CD8-positive, alpha-beta T cell (primary cell): ENCODE measurements at regions of chr22 and their contacts with region 1.

Region 1: GRCh38 chr22:36775964-36776669 is at the start of gene IFT27:
- DNase-seq: peak; percentile 89 to 100 (median 95)
- ATAC-seq: peak; percentile 84
- H3K4me3 ChIP-seq: peak within 1 kb of the TSS; percentile 72 to 73
- H3K4me3 Mint-ChIP-seq: peak within 1 kb of the TSS; percentile 93
- H3K27ac ChIP-seq: peak within 1 kb of the TSS; percentile 89 to 92
- H3K27ac Mint-ChIP-seq: peak within 1 kb of the TSS; percentile 94
- H3K4me1 ChIP-seq: peaks cover 14% of the 10 kb centered on the region
- H3K4me1 Mint-ChIP-seq: peaks cover 29% of the 10 kb centered on the region
- H3K27me3 ChIP-seq: no peaks in the 10 kb centered on the region
- H3K27me3 Mint-ChIP-seq: no peaks in the 10 kb centered on the region
- CTCF ChIP-seq: no peak
- total RNA-seq, gene IFT27: 9.2 to 9.9 TPM

Region 2: DNA sequence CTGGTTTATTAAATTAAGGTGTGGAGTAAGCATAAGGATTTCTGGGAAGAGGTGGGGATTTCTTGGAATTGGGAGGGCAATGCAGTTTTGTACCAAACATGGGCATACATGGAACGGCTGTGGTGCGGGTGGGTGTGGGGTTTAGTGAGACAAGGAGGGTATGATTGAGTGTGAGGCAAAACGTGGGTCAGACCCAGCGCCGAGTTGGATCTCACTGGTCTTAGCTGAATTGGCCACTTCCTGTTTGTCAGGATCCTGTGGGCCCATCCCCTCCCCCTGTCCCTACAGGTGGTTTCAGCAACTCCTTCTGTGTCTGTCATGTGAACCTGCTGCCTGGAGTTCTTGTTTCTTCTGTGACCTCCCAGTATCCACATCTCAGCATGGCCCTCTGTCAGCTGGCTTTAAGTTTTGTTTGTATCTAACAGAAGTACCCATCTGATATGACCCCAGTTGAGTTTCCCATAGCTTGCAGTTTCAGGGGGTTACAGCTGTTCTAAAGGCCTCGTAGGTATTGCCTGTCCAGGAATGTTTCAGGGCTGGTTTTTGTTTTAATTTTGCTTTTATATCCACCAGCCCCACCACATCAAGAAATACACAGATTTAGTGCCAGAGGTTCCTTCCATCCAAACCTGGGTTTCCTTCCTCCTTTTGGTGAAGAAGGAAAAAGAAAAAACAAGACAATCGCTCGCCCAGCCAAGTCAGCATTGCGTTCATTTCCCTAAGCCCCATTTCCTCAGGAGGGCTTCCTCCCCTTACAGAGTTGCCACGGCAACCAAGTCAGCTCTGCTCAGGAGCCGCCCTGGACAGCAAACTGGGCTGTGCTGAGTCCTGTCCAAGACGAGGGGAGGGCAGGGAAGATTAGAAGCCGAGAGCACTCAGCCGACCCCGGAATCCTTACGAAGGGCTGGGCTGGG is 517.2 kb before region 1 on chr22:
- CTCF ChIA-PET with region 1: no interaction called
- POLR2A ChIA-PET with region 1: no interaction called
- intact Hi-C with region 1: no loop called
- DNase-seq: peak in 2 of 9 experiments; percentile 26 to 38
- ATAC-seq: peak; percentile 26
- H3K4me3 ChIP-seq: no peak overlapping the region
- H3K4me3 Mint-ChIP-seq: peak overlapping the region; percentile 35
- H3K27ac ChIP-seq: peak overlapping the region in 1 of 2 experiments; percentile 26
- H3K27ac Mint-ChIP-seq: peak overlapping the region; percentile 80
- H3K4me1 ChIP-seq: peaks cover 28% of the 10 kb centered on the region
- H3K4me1 Mint-ChIP-seq: peaks cover 47% of the 10 kb centered on the region
- H3K27me3 ChIP-seq: no peaks in the 10 kb centered on the region
- H3K27me3 Mint-ChIP-seq: no peaks in the 10 kb centered on the region
- CTCF ChIP-seq: no peak

Region 3: GRCh38 chr22:36528795-36529751 is 247.0 kb before region 1 on chr22 and contains the start of gene EIF3D:
- CTCF ChIA-PET with region 1: no interaction called
- POLR2A ChIA-PET with region 1: no interaction called
- intact Hi-C with region 1: loop called in 1 of 2 experiments (anchors 1 kb)
- DNase-seq: peak; percentile 95 to 100 (median 98)
- ATAC-seq: peak; percentile 92
- H3K4me3 ChIP-seq: peak within 1 kb of the TSS; percentile 67 to 90
- H3K4me3 Mint-ChIP-seq: peak within 1 kb of the TSS; percentile 90
- H3K27ac ChIP-seq: peak within 1 kb of the TSS; percentile 91 to 93
- H3K27ac Mint-ChIP-seq: peak within 1 kb of the TSS; percentile 99
- H3K4me1 ChIP-seq: peaks cover 12% of the 10 kb centered on the region
- H3K4me1 Mint-ChIP-seq: peaks cover 24% of the 10 kb centered on the region
- H3K27me3 ChIP-seq: no peaks in the 10 kb centered on the region
- H3K27me3 Mint-ChIP-seq: no peaks in the 10 kb centered on the region
- CTCF ChIP-seq: no peak
- total RNA-seq, gene EIF3D: 302 to 315 TPM

Region 4: DNA sequence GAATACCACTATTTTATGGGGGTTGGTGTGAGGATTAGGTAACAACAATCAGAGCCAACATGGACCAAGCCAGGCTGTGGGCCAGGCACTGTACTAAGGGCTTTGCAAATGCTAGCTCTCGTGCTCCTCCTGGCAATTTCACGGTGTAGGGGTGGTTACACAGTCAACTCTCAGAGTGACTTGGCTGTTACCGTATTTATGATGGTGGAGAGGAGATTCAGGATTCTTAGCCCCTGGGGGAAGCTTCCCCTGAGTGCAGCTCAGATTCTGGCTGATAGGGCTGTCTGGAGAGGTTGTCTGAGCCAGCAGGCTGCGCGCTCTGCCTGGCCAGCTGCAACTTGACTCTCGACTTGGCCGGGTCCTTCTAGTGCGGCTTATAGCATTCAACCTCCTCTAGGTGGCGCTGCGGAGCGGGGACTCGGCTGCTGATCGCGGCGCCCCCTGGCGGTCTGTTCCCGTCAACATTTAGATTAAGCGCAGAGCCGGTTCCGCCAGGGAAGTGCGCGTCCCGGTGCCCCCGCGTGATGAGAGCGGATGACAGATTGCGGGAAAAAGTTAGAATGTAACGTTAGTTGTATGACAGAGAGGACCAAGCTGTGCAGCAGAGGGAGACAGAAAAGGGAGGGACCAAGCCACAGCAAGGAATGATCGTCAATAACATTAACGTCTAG is 80.1 kb after region 1 on chr22:
- CTCF ChIA-PET with region 1: interaction called, 62 read pairs
- POLR2A ChIA-PET with region 1: interaction called, 3 read pairs
- intact Hi-C with region 1: no loop called
- DNase-seq: peak; percentile 86 to 99 (median 94)
- ATAC-seq: peak; percentile 78
- H3K4me3 ChIP-seq: no peak overlapping the region
- H3K4me3 Mint-ChIP-seq: peak overlapping the region; percentile 13
- H3K27ac ChIP-seq: no peak overlapping the region
- H3K27ac Mint-ChIP-seq: no peak overlapping the region
- H3K4me1 ChIP-seq: peaks cover 16% of the 10 kb centered on the region
- H3K4me1 Mint-ChIP-seq: peaks cover 13% of the 10 kb centered on the region
- H3K27me3 ChIP-seq: no peaks in the 10 kb centered on the region
- H3K27me3 Mint-ChIP-seq: no peaks in the 10 kb centered on the region
- CTCF ChIP-seq: peak; percentile 100

Region 5: DNA sequence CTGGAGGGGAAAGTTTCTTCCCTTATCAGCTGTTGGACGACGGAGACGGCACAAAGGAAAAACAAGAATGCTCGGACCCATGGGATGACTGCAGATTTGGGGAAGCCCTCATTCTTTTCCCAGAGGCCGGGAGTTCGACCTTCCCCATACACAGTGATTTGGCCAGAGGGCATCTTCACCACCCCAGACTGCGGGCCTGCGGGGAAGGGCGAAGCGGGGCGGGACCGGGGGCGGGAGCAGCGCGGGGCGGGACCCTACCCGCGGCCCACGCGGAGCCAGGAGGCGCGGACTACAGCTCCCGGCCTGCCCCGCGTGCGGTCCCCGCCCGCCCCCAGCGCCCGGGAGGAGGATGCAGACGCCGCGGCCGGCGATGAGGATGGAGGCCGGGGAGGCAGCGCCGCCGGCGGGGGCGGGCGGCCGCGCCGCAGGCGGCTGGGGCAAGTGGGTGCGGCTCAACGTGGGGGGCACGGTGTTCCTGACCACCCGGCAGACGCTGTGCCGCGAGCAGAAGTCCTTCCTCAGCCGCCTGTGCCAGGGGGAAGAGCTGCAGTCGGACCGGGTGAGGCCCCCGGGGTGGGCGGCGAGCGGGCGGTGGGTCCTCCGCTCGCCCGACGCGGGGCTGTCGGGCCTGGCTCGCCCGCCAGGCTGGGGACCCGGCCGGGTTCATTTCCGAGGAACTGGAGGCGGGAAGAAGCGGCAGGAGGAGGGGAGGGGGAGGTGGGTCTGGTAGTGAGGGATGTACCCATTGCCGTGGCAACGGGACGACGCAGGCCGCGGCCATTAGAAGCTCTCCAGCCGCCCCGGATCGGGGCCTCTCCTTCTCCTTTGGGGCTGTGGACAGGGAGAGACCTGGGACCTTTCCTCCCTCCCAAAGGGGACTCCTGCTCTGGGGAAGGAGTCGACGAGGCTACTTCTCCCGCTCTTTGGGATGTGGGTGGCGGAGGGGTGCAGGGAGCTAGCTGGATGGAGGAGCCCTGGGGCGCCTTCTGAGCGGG is 275.6 kb after region 1 on chr22 and contains the start of gene KCTD17:
- CTCF ChIA-PET with region 1: no interaction called
- POLR2A ChIA-PET with region 1: no interaction called
- intact Hi-C with region 1: loop called in 1 of 2 experiments (anchors 10 kb)
- DNase-seq: peak; percentile 40 to 84 (median 72)
- ATAC-seq: peak; percentile 100
- H3K4me3 ChIP-seq: peak within 1 kb of the TSS; percentile 46 to 65
- H3K4me3 Mint-ChIP-seq: peak within 1 kb of the TSS; percentile 84
- H3K27ac ChIP-seq: peak within 1 kb of the TSS in 1 of 2 experiments; percentile 37
- H3K27ac Mint-ChIP-seq: no peak within 1 kb of the TSS
- H3K4me1 ChIP-seq: peaks cover 11% of the 10 kb centered on the region
- H3K4me1 Mint-ChIP-seq: peaks cover 10% of the 10 kb centered on the region
- H3K27me3 ChIP-seq: no peaks in the 10 kb centered on the region
- H3K27me3 Mint-ChIP-seq: no peaks in the 10 kb centered on the region
- CTCF ChIP-seq: no peak
- total RNA-seq, gene KCTD17: 18.6 to 22.8 TPM

Region 6: DNA sequence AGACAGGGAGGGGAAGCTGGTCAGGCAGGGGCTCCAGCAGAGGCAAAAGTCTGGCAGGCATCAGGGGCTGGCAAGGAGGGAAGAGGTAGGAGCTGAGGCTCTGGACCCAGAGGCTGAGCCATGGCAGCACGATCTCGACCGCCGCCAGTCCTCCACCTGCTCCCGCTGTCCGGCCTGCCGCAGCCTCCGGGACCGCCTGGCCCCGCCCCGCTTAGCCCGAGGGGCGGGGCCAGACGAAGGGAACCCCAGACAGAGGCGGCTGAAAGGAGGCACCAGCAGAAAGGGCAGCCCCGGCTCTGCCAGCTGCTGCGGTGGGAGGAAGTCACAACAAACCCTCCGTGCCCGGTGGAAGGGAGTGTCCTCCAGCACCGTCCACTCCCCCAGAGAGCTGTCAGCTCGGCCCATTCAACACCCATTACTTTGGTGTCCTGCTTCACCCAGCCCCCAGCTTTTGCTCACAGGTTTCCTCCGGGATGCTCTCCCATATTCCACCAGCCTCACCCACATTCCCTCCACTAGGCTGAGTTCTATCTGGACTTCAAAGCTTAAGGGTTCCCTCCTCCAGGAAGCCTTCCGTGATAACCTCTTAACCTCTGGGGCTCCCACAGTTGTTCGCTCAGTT is 710.2 kb after region 1 on chr22 and contains the start of gene MFNG:
- CTCF ChIA-PET with region 1: no interaction called
- POLR2A ChIA-PET with region 1: no interaction called
- intact Hi-C with region 1: loop called in 1 of 2 experiments (anchors 10 kb)
- DNase-seq: peak; percentile 35 to 87 (median 74)
- ATAC-seq: peak; percentile 59
- H3K4me3 ChIP-seq: peak within 1 kb of the TSS; percentile 73 to 96
- H3K4me3 Mint-ChIP-seq: peak within 1 kb of the TSS; percentile 94
- H3K27ac ChIP-seq: peak within 1 kb of the TSS; percentile 69 to 87
- H3K27ac Mint-ChIP-seq: peak within 1 kb of the TSS; percentile 98
- H3K4me1 ChIP-seq: peaks cover 62% of the 10 kb centered on the region
- H3K4me1 Mint-ChIP-seq: peaks cover 72% of the 10 kb centered on the region
- H3K27me3 ChIP-seq: no peaks in the 10 kb centered on the region
- H3K27me3 Mint-ChIP-seq: no peaks in the 10 kb centered on the region
- CTCF ChIP-seq: no peak
- total RNA-seq, gene MFNG: 63.2 to 63.9 TPM